A549 (cell line): ENCODE measurements at regions of chr19 and their contacts with region 1.

Region 1: GRCh38 chr19:40221858-40222837 is 4.0 kb upstream of the TTC9B start:
- DNase-seq: peak; percentile 97 to 100
- ATAC-seq: peak; percentile 30 to 75
- H3K4me3 ChIP-seq: no peak overlapping the region
- H3K27ac ChIP-seq: no peak overlapping the region
- H3K4me1 ChIP-seq: peaks cover 35% of the 10 kb centered on the region
- CTCF ChIP-seq: peak; percentile 99
- EP300 ChIP-seq: no peak
- POLR2A ChIP-seq: no peak
- RAD21 ChIP-seq: peak; percentile 98 to 99

Region 2: DNA sequence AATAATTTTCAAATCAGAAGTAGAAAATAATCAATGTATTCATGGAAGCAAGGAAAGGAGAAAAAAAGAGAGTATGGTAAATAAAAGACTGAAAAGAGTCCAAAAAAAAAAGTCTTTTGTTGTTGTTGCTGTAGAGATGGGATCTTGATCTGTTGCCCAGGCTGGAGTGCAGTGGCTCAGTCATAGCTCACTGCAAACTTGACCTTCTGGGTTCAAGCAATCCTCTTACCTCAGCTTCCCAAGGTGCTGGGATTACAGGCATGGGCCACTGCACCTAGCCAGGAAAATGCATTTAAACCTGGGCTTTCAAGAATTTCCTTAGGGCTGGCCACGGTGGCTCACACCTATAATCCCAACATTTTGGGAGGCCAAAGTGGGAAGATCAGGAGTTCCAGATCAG is 37.9 kb before region 1 on chr19:
- CTCF ChIA-PET with region 1: interaction called, 52 read pairs
- POLR2A ChIA-PET with region 1: no interaction called
- DNase-seq: no peak
- ATAC-seq: no peak
- H3K4me3 ChIP-seq: no peak overlapping the region
- H3K27ac ChIP-seq: no peak overlapping the region
- H3K4me1 ChIP-seq: peaks cover 5% of the 10 kb centered on the region; the same call in 2 of the 3 replicates
- CTCF ChIP-seq: no peak
- EP300 ChIP-seq: no peak
- POLR2A ChIP-seq: no peak
- RAD21 ChIP-seq: no peak

Region 3: DNA sequence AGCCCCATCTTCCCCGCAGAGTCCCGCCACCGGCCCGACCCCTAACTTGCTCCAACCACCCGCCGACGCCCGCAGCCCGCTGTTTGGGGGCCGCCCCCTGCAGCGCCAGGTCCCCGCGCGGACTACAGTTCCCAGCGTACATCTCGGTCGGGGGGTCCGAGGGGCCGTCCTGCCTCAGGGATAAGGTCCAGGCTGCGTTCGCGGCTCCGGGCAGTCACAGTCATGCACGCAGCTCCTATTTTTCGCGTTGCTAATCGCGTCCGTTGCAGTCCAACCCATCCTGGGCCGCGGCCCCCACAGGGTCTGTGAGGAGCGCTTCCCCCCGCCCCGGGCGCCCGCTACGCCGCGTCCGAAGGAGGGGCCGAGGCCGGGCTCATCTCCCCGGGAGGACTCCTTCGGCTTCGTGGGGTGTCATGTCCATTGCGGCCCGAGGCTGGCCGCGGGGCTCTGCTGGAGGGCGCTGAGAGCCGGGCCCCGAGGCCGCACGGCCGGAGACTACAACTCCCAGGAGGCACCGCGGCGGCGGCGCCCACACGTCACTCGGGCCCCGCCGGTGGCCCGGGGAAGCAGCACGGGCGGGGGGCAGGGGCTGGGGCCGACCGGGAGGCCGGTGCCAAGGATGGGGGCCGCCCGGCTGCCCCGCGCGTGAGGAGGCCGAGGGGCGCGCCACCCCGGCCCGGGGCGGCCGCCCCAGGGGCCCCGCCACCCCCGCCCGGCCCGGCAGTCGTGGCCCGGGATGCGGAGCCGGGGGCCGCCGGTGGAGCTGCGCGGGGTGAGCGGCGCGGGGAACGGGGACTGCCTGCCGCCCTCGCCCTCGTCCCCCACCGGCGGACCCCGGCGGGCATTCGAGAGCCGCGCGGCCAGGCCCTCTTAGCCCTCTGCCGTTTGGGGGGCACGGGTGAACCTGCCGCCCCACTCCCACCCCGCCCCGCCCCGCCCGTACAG is 31.0 kb before region 1 on chr19 and contains the start of gene MAP3K10:
- CTCF ChIA-PET with region 1: interaction called, 149 read pairs
- POLR2A ChIA-PET with region 1: interaction called, 8 read pairs
- DNase-seq: peak; percentile 82 to 95
- ATAC-seq: peak; percentile 88 to 92
- H3K4me3 ChIP-seq: peak within 1 kb of the TSS; percentile 77
- H3K27ac ChIP-seq: peak within 1 kb of the TSS; percentile 88 to 92
- H3K4me1 ChIP-seq: peaks cover 21% of the 10 kb centered on the region
- CTCF ChIP-seq: no peak
- EP300 ChIP-seq: no peak
- POLR2A ChIP-seq: 0 out of 2 replicates have a peak, but pooled peaks have one; percentile 33
- RAD21 ChIP-seq: no peak; a peak in 1 of 5 replicates
- polyA plus RNA-seq, gene MAP3K10: 6.0 and 6.6 TPM in 2 replicates

Region 4: GRCh38 chr19:40200341-40201099 is 21.6 kb before region 1 on chr19:
- CTCF ChIA-PET with region 1: interaction called, 149 read pairs
- POLR2A ChIA-PET with region 1: interaction called, 3 read pairs
- DNase-seq: no peak
- ATAC-seq: peak in 1 of 2 experiments; percentile 34; a peak in 2 of 6 replicates
- H3K4me3 ChIP-seq: no peak overlapping the region
- H3K27ac ChIP-seq: no peak overlapping the region
- H3K4me1 ChIP-seq: no peaks in the 10 kb centered on the region
- CTCF ChIP-seq: no peak
- EP300 ChIP-seq: no peak
- POLR2A ChIP-seq: no peak
- RAD21 ChIP-seq: no peak

Region 5: DNA sequence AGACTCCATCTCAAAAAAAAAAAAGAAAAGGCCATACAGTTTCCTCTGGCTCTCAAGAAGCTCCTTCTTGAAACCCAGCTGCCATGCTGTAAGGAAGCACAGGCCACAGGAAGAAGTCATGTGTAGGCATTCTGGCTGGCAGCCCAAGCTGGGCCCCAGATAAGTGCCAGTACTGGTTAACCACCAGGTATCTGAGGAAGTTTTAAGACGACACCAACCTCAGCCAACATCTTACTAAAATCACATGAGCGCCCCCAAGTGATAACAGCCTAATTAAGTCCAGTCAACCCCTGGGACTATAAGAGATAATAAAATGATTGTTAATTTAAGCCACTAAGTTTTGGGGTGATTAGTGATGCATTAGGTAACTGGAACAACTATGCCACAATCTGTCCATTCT is 90.4 kb after region 1 on chr19:
- CTCF ChIA-PET with region 1: no interaction called
- POLR2A ChIA-PET with region 1: no interaction called
- DNase-seq: no peak
- ATAC-seq: no peak
- H3K4me3 ChIP-seq: no peak overlapping the region
- H3K27ac ChIP-seq: no peak overlapping the region
- H3K4me1 ChIP-seq: no peaks in the 10 kb centered on the region
- CTCF ChIP-seq: no peak
- EP300 ChIP-seq: no peak
- POLR2A ChIP-seq: no peak
- RAD21 ChIP-seq: no peak; a peak in 1 of 5 replicates